PC-9 (cell line): ENCODE measurements at regions of chr2 and their contacts with region 1.

Region 1: DNA sequence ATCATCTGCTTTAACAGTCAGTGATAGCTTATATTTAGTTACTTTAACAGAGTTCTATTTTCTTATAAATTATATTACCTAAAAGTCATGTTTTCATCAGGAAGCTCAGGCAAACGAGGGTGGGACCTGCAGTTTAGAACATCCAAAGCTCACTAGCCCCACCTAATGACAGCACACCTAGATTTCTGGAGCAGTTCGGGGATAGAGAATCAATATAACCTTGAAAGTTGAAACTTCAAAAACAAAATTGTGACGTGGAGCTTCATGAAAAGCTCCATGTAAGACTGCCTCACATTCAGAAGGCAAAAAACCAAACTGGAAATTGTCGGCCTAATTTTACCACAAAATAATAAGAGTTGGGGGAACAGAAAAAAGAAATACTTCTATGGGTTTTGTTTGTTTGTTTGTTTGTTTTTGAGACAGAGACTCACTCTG is 185.9 kb upstream of the CCDC150 start:
- DNase-seq: peak in 1 of 2 experiments; percentile 14
- H3K4me3 ChIP-seq: no peak overlapping the region
- H3K27ac ChIP-seq: no peak overlapping the region
- H3K4me1 ChIP-seq: no peaks in the 10 kb centered on the region
- H3K27me3 ChIP-seq: no peaks in the 10 kb centered on the region
- CTCF ChIP-seq: peak; percentile 68

Region 2: GRCh38 chr2:195857132-195857531 is 596.5 kb before region 1 on chr2:
- CTCF ChIA-PET with region 1: no interaction called
- POLR2A ChIA-PET with region 1: no interaction called
- intact Hi-C with region 1: no loop called
- DNase-seq: no peak
- H3K4me3 ChIP-seq: no peak overlapping the region
- H3K27ac ChIP-seq: no peak overlapping the region
- H3K4me1 ChIP-seq: no peaks in the 10 kb centered on the region
- H3K27me3 ChIP-seq: no peaks in the 10 kb centered on the region
- CTCF ChIP-seq: no peak

Region 3: DNA sequence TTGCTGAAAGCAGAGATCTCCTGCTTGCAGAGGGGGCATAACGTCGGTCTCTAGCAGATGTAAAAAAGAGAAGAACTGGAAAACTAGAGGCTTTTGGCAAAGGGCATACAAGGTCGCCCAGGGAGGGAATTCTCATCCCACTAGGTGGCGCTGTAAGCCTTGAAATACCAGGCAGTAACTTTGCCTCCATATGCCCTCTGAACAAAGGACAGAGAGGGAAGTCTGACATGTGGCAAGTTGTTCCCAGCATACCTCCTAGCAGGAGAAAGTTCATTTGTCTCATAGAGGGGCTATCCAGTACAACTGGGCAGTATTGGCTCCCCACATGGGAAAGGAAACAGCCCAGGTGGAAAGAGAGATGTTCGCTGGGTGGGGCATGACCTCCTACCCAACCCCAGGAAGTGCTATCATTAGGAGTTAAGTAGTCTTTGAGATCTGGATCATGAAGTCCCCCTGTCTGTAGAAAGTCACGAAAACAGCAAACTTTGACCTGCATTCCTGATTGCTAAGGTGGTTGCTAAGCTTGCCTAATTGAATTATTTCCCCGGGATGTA is 322.2 kb before region 1 on chr2:
- CTCF ChIA-PET with region 1: no interaction called
- POLR2A ChIA-PET with region 1: no interaction called
- intact Hi-C with region 1: loop called (anchors 5 kb)
- DNase-seq: peak; percentile 25 to 47
- H3K4me3 ChIP-seq: no peak overlapping the region
- H3K27ac ChIP-seq: no peak overlapping the region
- H3K4me1 ChIP-seq: no peaks in the 10 kb centered on the region
- H3K27me3 ChIP-seq: no peaks in the 10 kb centered on the region
- CTCF ChIP-seq: peak; percentile 76

Region 4: DNA sequence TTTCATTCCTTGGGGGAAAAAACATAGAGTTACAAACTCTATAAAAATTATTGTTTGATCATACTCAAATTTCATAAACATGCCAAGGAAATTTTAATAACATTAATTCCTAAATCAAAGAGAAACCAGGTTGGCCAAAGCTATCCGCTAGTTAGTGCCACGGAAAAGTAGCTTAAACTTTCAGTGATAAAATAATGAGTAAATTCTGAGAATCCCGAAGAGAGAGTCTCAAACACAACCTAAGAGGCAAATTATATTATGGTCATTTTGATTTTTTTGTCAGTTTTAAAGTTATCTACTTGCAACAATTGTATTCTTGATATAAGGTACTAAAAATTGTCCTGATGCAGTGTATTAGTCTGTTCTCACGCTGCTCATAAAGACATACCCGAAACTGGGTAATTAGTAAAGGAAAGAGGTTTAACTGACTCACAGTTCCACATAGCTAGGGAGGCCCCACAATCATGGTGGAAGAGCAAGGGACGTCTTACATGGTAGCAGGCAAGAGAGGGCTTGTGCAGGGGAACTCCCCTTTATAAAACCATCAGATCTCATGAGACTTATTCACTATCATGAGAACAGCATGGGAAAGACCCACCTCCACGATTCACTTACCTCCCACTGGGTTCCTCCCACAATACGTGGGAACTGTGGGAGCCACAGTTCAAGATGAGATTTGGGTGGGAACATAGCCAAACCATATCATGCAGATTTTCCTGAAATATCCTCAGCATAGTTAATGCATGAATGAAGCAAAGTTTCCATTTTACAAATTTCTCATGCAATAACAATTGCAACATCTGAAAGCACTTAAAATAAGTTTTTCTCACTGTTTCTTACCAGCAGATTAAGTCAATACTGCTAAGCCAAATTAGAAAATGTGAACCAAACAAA is 76.4 kb before region 1 on chr2:
- CTCF ChIA-PET with region 1: interaction called, 10 read pairs
- POLR2A ChIA-PET with region 1: no interaction called
- intact Hi-C with region 1: no loop called
- DNase-seq: no peak
- H3K4me3 ChIP-seq: no peak overlapping the region
- H3K27ac ChIP-seq: no peak overlapping the region
- H3K4me1 ChIP-seq: no peaks in the 10 kb centered on the region
- H3K27me3 ChIP-seq: no peaks in the 10 kb centered on the region
- CTCF ChIP-seq: no peak

Region 5: GRCh38 chr2:196390243-196391148 is 63.1 kb before region 1 on chr2:
- CTCF ChIA-PET with region 1: no interaction called
- POLR2A ChIA-PET with region 1: no interaction called
- intact Hi-C with region 1: no loop called
- DNase-seq: no peak
- H3K4me3 ChIP-seq: no peak overlapping the region
- H3K27ac ChIP-seq: no peak overlapping the region
- H3K4me1 ChIP-seq: no peaks in the 10 kb centered on the region
- H3K27me3 ChIP-seq: no peaks in the 10 kb centered on the region
- CTCF ChIP-seq: no peak

Region 6: DNA sequence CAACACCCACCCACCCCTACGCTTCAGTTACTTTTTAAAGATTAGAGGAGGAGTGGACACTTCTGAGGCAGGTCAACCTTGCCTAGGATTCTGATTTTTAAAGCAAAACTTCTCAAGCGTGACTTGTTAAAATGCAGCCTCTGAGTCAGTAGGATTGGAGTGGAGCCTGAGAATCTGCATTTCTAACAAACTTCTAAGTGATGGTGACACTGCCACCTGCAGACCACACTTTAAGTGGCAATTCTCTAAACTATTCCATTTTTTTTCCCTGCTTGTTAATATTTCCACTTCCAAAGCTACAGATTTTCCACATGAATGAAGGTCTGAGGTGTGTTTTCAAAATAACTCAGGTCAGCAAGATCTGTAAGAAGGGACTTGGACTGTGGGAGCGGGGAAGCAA is 14.8 kb after region 1 on chr2:
- CTCF ChIA-PET with region 1: no interaction called
- POLR2A ChIA-PET with region 1: no interaction called
- intact Hi-C with region 1: no loop called
- DNase-seq: no peak
- H3K4me3 ChIP-seq: no peak overlapping the region
- H3K27ac ChIP-seq: no peak overlapping the region
- H3K4me1 ChIP-seq: no peaks in the 10 kb centered on the region
- H3K27me3 ChIP-seq: no peaks in the 10 kb centered on the region
- CTCF ChIP-seq: no peak

Region 7: DNA sequence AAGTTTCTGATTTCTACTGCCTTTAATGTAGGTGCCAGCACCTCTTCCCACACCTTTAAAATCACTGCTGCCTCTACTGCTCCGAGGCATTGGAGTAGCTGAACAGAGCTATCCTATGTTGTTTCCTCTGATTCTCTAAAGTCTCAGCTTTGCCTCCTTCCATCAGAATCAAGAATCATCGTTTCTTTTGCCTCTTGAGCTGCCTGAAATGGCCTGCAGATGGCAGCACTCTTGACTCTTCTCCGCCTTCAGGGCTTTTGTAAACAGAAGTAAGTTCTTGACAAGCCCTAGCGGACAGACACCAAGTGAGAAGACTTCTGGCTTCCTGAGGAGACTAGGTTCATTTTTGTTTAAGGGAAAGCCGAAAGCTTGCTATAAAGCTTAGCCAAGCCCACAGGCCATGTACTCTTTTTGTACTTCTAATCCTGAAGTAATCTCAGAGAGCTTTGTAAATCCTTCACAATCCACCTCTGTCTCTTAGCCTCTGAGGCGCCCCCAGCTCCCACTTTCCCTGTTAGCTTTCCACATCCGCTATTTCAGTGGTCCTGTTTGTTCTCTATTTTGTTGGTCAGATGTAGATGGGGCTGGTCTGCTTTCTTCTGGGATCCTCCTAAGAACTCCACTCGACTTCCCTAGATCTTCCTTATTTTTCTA is 297.5 kb after region 1 on chr2:
- CTCF ChIA-PET with region 1: no interaction called
- POLR2A ChIA-PET with region 1: no interaction called
- intact Hi-C with region 1: loop called (anchors 10 kb)
- DNase-seq: peak in 1 of 2 experiments; percentile 1
- H3K4me3 ChIP-seq: no peak overlapping the region
- H3K27ac ChIP-seq: no peak overlapping the region
- H3K4me1 ChIP-seq: no peaks in the 10 kb centered on the region
- H3K27me3 ChIP-seq: no peaks in the 10 kb centered on the region
- CTCF ChIP-seq: peak; percentile 48; the same call in 1 of the 2 replicates